ENCODE measurements at regions of chr9 and their contacts with region 1.

Region 1: GRCh38 chr9:120477521-120478001 is 102.4 kb downstream of the CDK5RAP2 start:
- DNase-seq: peak; percentile 42
- H3K4me3 ChIP-seq: no peak overlapping the region
- H3K27me3 ChIP-seq: no peaks in the 10 kb centered on the region
- CTCF ChIP-seq: peak; percentile 100

Region 2: GRCh38 chr9:119412399-119412798 is 1065.2 kb before region 1 on chr9:
- CTCF ChIA-PET with region 1: no interaction called
- POLR2A ChIA-PET with region 1: no interaction called
- DNase-seq: no peak
- H3K4me3 ChIP-seq: no peak overlapping the region
- H3K27me3 ChIP-seq: no peaks in the 10 kb centered on the region
- CTCF ChIP-seq: no peak

Region 3: GRCh38 chr9:119556129-119556875 is 921.3 kb before region 1 on chr9:
- CTCF ChIA-PET with region 1: interaction called, 25 read pairs
- POLR2A ChIA-PET with region 1: interaction called, 10 read pairs
- DNase-seq: peak; percentile 9
- H3K4me3 ChIP-seq: peak overlapping the region; percentile 35
- H3K27me3 ChIP-seq: no peaks in the 10 kb centered on the region
- CTCF ChIP-seq: peak; percentile 98

Region 4: GRCh38 chr9:120348951-120349429 is 128.6 kb before region 1 on chr9:
- CTCF ChIA-PET with region 1: interaction called, 16 read pairs
- POLR2A ChIA-PET with region 1: no interaction called
- DNase-seq: no peak
- H3K4me3 ChIP-seq: no peak overlapping the region
- H3K27me3 ChIP-seq: no peaks in the 10 kb centered on the region
- CTCF ChIP-seq: peak; percentile 65

Region 5: GRCh38 chr9:120438836-120439546 is 38.6 kb before region 1 on chr9:
- CTCF ChIA-PET with region 1: interaction called, 21 read pairs
- POLR2A ChIA-PET with region 1: no interaction called
- DNase-seq: no peak
- H3K4me3 ChIP-seq: no peak overlapping the region
- H3K27me3 ChIP-seq: no peaks in the 10 kb centered on the region
- CTCF ChIP-seq: peak; percentile 64

Region 6: GRCh38 chr9:120531683-120532300 is 54.2 kb after region 1 on chr9:
- CTCF ChIA-PET with region 1: interaction called, 11 read pairs
- POLR2A ChIA-PET with region 1: no interaction called
- DNase-seq: no peak
- H3K4me3 ChIP-seq: no peak overlapping the region
- H3K27me3 ChIP-seq: no peaks in the 10 kb centered on the region
- CTCF ChIP-seq: peak; percentile 56

Measured in BJ (cell line).